K562 (cell line): ENCODE measurements at regions of chr3 and their contacts with region 1.

Region 1: DNA sequence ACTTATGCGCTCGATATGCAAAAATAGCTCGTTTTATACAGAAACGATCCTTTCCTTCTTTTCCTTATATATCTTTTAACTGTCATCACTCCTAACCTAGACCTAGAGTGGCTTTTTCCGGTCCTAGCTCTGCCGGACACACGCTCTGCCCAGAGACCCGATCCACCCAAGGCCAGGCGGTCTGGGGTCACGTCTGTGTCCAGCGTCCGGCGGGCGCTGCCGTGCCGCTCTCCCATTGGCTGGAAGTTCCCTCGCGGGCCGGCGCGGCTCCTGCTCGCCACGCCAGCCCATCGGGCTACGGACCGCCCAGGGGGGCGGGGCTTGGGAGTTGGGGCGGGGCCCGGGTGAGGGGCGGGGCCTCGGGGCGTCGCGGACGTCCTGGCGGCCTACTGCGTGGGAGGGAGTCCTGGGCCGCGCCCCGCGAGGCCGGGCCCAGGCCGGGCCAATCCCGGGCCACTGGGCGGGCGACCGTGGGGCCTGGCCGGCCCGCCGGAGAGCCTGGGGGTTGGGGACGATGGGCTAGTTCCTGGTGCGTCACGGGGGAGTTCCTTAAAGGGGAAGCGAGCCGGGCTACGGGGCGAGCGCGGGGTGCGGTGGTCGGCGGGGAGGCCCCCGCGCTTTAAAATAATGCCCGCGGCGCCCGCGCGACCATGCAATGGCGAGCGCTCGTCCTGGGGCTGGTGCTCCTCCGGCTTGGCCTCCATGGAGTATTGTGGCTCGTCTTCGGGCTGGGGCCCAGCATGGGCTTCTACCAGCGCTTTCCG is at the start of gene EDEM1:
- DNase-seq: peak; percentile 96 to 99 (median 99)
- ATAC-seq: peak; percentile 93
- H3K4me3 ChIP-seq: peak within 1 kb of the TSS; percentile 87
- H3K27ac ChIP-seq: peak within 1 kb of the TSS; percentile 97
- H3K4me1 ChIP-seq: peaks cover 21 to 48% of the 10 kb centered on the region in 2 experiments
- H3K27me3 ChIP-seq: no peaks in the 10 kb centered on the region
- CTCF ChIP-seq: no peak; a peak in 1 of 6 replicates
- EP300 ChIP-seq: no peak
- POLR2A ChIP-seq: peak; percentile 97
- RAD21 ChIP-seq: no peak
- polyA plus RNA-seq, gene EDEM1: 6.2 to 8.8 TPM

Region 2: GRCh38 chr3:4712143-4712542 is 475.2 kb before region 1 on chr3:
- CTCF ChIA-PET with region 1: no interaction called
- POLR2A ChIA-PET with region 1: no interaction called
- in situ Hi-C with region 1: no loop called
- intact Hi-C with region 1: loop called (anchors 5 kb)
- DNase-seq: no peak
- ATAC-seq: no peak
- H3K4me3 ChIP-seq: no peak overlapping the region
- H3K27ac ChIP-seq: no peak overlapping the region
- H3K4me1 ChIP-seq: no peaks in the 10 kb centered on the region; a peak in 1 of 5 replicates
- H3K27me3 ChIP-seq: no peaks in the 10 kb centered on the region
- CTCF ChIP-seq: no peak
- EP300 ChIP-seq: no peak
- POLR2A ChIP-seq: no peak
- RAD21 ChIP-seq: 0 out of 4 replicates have a peak, but pooled peaks of 1 of the 2 experiments have one; percentile 3

Region 3: GRCh38 chr3:5071061-5071460 is 116.3 kb before region 1 on chr3:
- CTCF ChIA-PET with region 1: no interaction called
- POLR2A ChIA-PET with region 1: no interaction called
- in situ Hi-C with region 1: no loop called
- intact Hi-C with region 1: loop called (anchors 5 kb)
- DNase-seq: no peak
- ATAC-seq: peak; percentile 16; the same call in 1 of the 3 replicates
- H3K4me3 ChIP-seq: no peak overlapping the region
- H3K27ac ChIP-seq: no peak overlapping the region
- H3K4me1 ChIP-seq: peaks cover 3 to 4% of the 10 kb centered on the region in 2 experiments; a peak in 2 of 5 replicates
- H3K27me3 ChIP-seq: peaks cover 4 to 8% of the 10 kb centered on the region in 2 experiments; a peak in 3 of 5 replicates
- CTCF ChIP-seq: peak in 1 of 3 experiments; percentile 15; a peak in 1 of 6 replicates
- EP300 ChIP-seq: no peak
- POLR2A ChIP-seq: no peak
- RAD21 ChIP-seq: peak in 1 of 2 experiments; percentile 18; a peak in 2 of 4 replicates

Region 4: GRCh38 chr3:5122030-5122740 is 65.2 kb before region 1 on chr3 and contains the start of gene ARL8B:
- CTCF ChIA-PET with region 1: no interaction called
- POLR2A ChIA-PET with region 1: interaction called, 5 read pairs
- in situ Hi-C with region 1: no loop called
- intact Hi-C with region 1: loop called (anchors 2 kb)
- DNase-seq: peak; percentile 95 to 97 (median 96)
- ATAC-seq: peak; percentile 96
- H3K4me3 ChIP-seq: peak within 1 kb of the TSS; percentile 99
- H3K27ac ChIP-seq: peak within 1 kb of the TSS; percentile 92
- H3K4me1 ChIP-seq: peaks cover 19 to 21% of the 10 kb centered on the region in 2 experiments
- H3K27me3 ChIP-seq: no peaks in the 10 kb centered on the region
- CTCF ChIP-seq: peak; percentile 99
- EP300 ChIP-seq: peak; percentile 82
- POLR2A ChIP-seq: peak; percentile 91
- RAD21 ChIP-seq: peak; percentile 61 to 75
- polyA plus RNA-seq, gene ARL8B: 47.8 to 49.6 TPM

Region 5: GRCh38 chr3:5162102-5162501 is 25.2 kb before region 1 on chr3:
- CTCF ChIA-PET with region 1: no interaction called
- POLR2A ChIA-PET with region 1: interaction called, 11 read pairs
- in situ Hi-C with region 1: no loop called
- intact Hi-C with region 1: no loop called
- DNase-seq: no peak
- ATAC-seq: no peak; the same call in 2 of the 3 replicates
- H3K4me3 ChIP-seq: no peak overlapping the region
- H3K27ac ChIP-seq: no peak overlapping the region
- H3K4me1 ChIP-seq: peaks cover 2 to 12% of the 10 kb centered on the region in 2 experiments; a peak in 4 of 5 replicates
- H3K27me3 ChIP-seq: no peaks in the 10 kb centered on the region
- CTCF ChIP-seq: no peak
- EP300 ChIP-seq: no peak
- POLR2A ChIP-seq: no peak
- RAD21 ChIP-seq: no peak

Region 6: GRCh38 chr3:5168110-5168509 is 19.2 kb before region 1 on chr3:
- CTCF ChIA-PET with region 1: no interaction called
- POLR2A ChIA-PET with region 1: interaction called, 10 read pairs
- in situ Hi-C with region 1: no loop called
- intact Hi-C with region 1: no loop called
- DNase-seq: no peak
- ATAC-seq: peak; percentile 66
- H3K4me3 ChIP-seq: no peak overlapping the region
- H3K27ac ChIP-seq: peak overlapping the region; percentile 9; the same call in 1 of the 3 replicates
- H3K4me1 ChIP-seq: peaks cover 0 to 17% of the 10 kb centered on the region in 2 experiments; a peak in 3 of 5 replicates
- H3K27me3 ChIP-seq: no peaks in the 10 kb centered on the region
- CTCF ChIP-seq: no peak
- EP300 ChIP-seq: no peak
- POLR2A ChIP-seq: no peak
- RAD21 ChIP-seq: no peak

Region 7: DNA sequence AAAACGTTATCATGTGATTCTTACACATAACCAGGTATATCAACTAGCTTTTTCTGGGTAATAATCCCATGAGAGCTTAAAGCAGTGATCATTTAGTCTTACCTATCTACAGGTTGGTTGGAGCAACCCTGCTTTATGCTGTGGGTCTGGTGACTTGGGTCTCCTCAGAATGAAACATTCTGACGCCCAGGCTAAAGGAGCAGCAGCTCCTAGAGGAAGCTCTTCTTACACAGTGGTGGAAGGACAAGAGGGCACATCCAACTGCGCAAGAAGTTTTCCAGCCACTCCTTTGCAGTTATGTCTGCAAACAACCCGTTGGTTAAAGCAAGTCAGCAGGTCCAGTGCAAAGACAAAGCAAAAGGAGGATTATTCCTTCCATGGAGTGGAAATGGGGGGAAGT is 377.7 kb after region 1 on chr3:
- CTCF ChIA-PET with region 1: no interaction called
- POLR2A ChIA-PET with region 1: no interaction called
- in situ Hi-C with region 1: no loop called
- intact Hi-C with region 1: loop called (anchors 2 kb)
- DNase-seq: peak; percentile 24 to 55 (median 38)
- ATAC-seq: peak; percentile 69
- H3K4me3 ChIP-seq: no peak overlapping the region
- H3K27ac ChIP-seq: peak overlapping the region; percentile 5; the same call in 1 of the 3 replicates
- H3K4me1 ChIP-seq: peaks cover 0 to 33% of the 10 kb centered on the region in 2 experiments; a peak in 3 of 5 replicates
- H3K27me3 ChIP-seq: no peaks in the 10 kb centered on the region; a peak in 1 of 5 replicates
- CTCF ChIP-seq: no peak
- EP300 ChIP-seq: no peak
- POLR2A ChIP-seq: no peak
- RAD21 ChIP-seq: no peak